GM18951 (cell line): ENCODE measurements at regions of chr6 and their contacts with region 1.

Region 1: DNA sequence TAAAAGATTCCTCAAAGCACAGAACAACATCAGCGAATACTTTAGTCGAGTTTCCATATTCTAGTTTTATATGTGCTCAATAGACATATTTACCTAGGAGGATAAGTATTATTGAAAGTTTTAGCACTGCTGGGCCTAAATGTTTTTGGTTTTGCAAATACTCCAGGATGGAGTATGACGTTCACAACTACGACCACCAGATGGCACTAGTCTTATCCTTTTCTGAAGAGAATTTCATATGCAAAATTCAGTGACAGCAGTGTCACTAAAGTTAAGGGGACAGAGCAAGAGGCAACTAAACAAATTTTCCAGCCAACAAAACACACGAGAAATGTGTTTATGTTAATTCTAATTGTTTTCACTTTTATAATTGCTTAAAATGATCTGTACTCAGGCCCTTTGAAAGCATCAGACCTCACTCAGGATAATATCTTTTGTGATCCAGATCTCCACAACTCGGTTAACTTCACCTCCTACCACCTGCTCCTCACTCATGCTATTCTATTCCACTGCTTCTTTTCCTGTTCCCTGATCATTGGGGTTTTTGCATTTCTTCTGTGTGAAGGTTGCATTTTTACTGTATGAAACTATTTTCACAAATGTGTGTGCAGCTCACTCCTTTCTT is 220.8 kb downstream of the TRDN start:
- POLR2A ChIP-seq: no peak

Region 2: DNA sequence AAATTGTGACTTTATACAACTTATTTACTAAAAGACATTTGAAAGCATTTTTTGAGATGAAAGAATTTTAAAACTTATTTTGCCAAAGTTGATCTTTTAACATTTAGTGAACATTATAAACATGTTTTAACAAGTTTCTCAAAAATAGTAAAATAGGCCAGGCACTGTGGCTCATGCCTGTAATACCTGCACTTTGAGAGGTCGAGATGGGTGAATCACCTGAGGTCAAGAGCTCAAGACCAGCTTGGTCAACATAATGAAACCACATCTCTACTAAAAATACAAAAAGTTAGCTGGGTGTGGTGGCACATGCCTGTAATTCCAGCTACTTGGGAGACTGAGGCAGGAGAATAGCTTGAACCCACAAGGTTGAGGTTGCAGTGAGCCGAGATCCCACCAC is 341.3 kb before region 1 on chr6:
- in situ Hi-C with region 1: no loop called
- POLR2A ChIP-seq: no peak

Region 3: DNA sequence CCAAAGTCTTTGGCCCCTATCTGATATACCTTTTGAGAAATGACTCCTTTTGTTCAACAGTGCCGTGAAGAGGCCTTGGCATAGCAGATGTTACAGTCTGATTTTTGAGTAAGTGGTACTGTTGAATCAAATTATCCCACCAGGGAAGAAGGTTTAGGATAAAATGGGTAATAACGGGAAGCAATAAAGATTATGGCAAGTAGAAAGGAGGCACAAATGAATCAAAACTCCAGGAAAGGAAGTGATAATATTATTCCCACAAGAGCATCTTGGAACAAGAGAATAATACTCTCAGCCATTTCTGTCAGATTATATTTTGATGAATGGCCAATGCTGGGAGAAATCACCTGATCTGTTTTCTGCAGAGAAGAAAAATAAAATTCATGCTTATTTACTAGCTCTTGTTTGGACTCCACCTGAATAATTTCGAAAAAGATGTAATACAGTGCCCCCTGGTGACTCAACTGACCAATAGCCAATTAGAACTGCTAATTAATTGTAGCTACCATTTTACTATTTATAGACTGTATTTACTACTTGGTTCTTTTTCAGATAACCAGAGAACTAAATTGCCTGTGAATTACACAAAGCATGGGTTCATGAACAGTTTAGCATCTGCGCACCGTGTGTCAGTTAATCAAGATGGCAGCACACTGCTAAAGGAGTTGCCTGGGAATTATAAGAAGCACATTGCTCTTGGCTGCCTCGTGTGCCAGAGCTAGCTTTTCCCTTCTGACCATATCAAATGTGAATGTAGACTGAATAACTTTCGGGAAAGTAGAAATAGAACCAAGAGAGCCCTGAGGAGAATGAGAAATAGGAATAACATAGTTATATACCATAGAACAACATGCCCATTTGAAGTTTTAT is 299.3 kb after region 1 on chr6:
- in situ Hi-C with region 1: loop called (anchors 10 kb)
- POLR2A ChIP-seq: no peak